ENCODE measurements at regions of chr14 and their contacts with region 1.

Region 1: GRCh38 chr14:68444449-68445168 is 348.3 kb downstream of the ZFP36L1 start:
- DNase-seq: peak; percentile 57 to 80
- H3K4me3 ChIP-seq: no peak overlapping the region
- H3K27ac ChIP-seq: peak overlapping the region; percentile 57 to 67
- H3K4me1 ChIP-seq: peaks cover 0 to 14% of the 10 kb centered on the region in 2 donors
- H3K27me3 ChIP-seq: no peaks in the 10 kb centered on the region
- CTCF ChIP-seq: no peak
- POLR2A ChIP-seq: no peak

Region 2: GRCh38 chr14:68328509-68328908 is 116.1 kb before region 1 on chr14:
- intact Hi-C with region 1: no loop called
- DNase-seq: no peak
- H3K4me3 ChIP-seq: no peak overlapping the region
- H3K27ac ChIP-seq: no peak overlapping the region
- H3K4me1 ChIP-seq: no peaks in the 10 kb centered on the region
- H3K27me3 ChIP-seq: no peaks in the 10 kb centered on the region
- CTCF ChIP-seq: no peak
- POLR2A ChIP-seq: no peak

Region 3: GRCh38 chr14:68369281-68370056 is 75.1 kb before region 1 on chr14:
- intact Hi-C with region 1: no loop called
- DNase-seq: no peak
- H3K4me3 ChIP-seq: no peak overlapping the region
- H3K27ac ChIP-seq: no peak overlapping the region
- H3K4me1 ChIP-seq: no peaks in the 10 kb centered on the region
- H3K27me3 ChIP-seq: no peaks in the 10 kb centered on the region
- CTCF ChIP-seq: no peak
- POLR2A ChIP-seq: no peak

Region 4: GRCh38 chr14:68520637-68521556 is 76.3 kb after region 1 on chr14:
- intact Hi-C with region 1: no loop called
- DNase-seq: peak in 1 of 2 donors; percentile 78
- H3K4me3 ChIP-seq: no peak overlapping the region
- H3K27ac ChIP-seq: peak overlapping the region; percentile 80 to 87
- H3K4me1 ChIP-seq: peaks cover 0 to 12% of the 10 kb centered on the region in 2 donors
- H3K27me3 ChIP-seq: no peaks in the 10 kb centered on the region
- CTCF ChIP-seq: no peak
- POLR2A ChIP-seq: no peak

Region 5: GRCh38 chr14:69079183-69079742 is 634.7 kb after region 1 on chr14:
- intact Hi-C with region 1: loop called (anchors 10 kb)
- DNase-seq: peak in 1 of 2 donors; percentile 44
- H3K4me3 ChIP-seq: no peak overlapping the region
- H3K27ac ChIP-seq: peak overlapping the region; percentile 72 to 78
- H3K4me1 ChIP-seq: no peaks in the 10 kb centered on the region
- H3K27me3 ChIP-seq: no peaks in the 10 kb centered on the region
- CTCF ChIP-seq: no peak
- POLR2A ChIP-seq: no peak

Region 6: GRCh38 chr14:70239802-70240201 is 1795.2 kb after region 1 on chr14:
- intact Hi-C with region 1: no loop called
- DNase-seq: no peak
- H3K4me3 ChIP-seq: no peak overlapping the region
- H3K27ac ChIP-seq: no peak overlapping the region
- H3K4me1 ChIP-seq: no peaks in the 10 kb centered on the region
- H3K27me3 ChIP-seq: no peaks in the 10 kb centered on the region
- CTCF ChIP-seq: no peak
- POLR2A ChIP-seq: no peak